ENCODE measurements at regions of chr1 and their contacts with region 1.

Region 1: GRCh38 chr1:205227584-205228006 is at the start of gene TMCC2:
- DNase-seq: peak; percentile 75 to 93 (median 82)
- ATAC-seq: peak; percentile 86 to 90
- H3K4me3 Mint-ChIP-seq: peak within 1 kb of the TSS; percentile 88 to 98 (median 93)
- H3K27ac Mint-ChIP-seq: peak within 1 kb of the TSS; percentile 55 to 95 (median 87)
- H3K4me1 Mint-ChIP-seq: peaks cover 14 to 28% (median 27%) of the 10 kb centered on the region in 4 donors
- H3K27me3 Mint-ChIP-seq: peaks cover 0 to 17% (median 0%) of the 10 kb centered on the region in 5 donors
- polyA plus RNA-seq, gene TMCC2: 0.37 to 2.0 (median 0.40) TPM

Region 2: DNA sequence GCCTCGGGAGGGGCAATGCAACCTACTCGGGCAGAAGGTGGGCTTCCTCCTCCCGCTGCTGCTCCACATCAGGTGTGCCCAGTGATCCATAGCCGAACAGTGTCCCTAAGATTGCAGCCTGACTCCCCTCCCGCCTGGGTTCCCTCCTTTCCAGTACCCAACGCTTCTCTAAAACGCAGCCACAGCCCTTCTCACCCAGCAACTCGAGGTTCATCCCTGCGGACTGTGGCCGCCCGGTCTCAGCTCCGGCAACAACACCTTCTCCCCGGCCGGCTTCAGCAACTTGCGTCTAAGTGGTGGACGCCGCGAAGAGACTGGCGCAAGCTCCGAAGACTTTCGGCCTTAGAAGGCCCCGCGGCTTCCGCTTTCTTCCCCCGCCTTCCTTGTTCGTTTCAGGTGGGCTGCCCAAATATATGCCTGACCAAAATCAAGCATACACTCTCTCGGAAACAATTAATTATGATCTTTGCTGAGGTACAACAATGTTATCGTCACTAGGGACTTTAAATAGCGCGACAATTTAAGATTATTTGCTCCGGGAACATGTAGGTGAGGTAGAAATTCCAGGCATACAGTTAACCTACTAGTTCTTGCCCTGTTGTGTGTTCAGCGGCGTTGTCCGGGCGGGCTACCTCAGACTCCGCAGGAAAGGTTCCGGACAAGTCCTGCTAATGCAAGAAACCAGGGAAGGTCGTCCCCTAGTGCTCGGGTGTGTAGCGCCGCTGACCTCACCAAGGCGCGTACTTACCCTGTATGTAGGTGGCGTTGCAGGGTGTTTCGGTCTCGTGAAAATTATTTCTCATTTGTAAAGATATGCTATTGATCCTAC is 105.7 kb before region 1 on chr1 and contains the start of gene RBBP5:
- POLR2A ChIA-PET with region 1: interaction called, 17 read pairs
- DNase-seq: peak; percentile 81 to 99 (median 94)
- ATAC-seq: peak; percentile 95
- H3K4me3 Mint-ChIP-seq: peak within 1 kb of the TSS; percentile 88 to 100 (median 98)
- H3K27ac Mint-ChIP-seq: peak within 1 kb of the TSS; percentile 98 to 100 (median 100)
- H3K4me1 Mint-ChIP-seq: peaks cover 19 to 53% (median 49%) of the 10 kb centered on the region in 4 donors
- H3K27me3 Mint-ChIP-seq: no peaks in the 10 kb centered on the region
- polyA plus RNA-seq, gene RBBP5: 20.4 to 23.2 (median 22.5) TPM

Region 3: DNA sequence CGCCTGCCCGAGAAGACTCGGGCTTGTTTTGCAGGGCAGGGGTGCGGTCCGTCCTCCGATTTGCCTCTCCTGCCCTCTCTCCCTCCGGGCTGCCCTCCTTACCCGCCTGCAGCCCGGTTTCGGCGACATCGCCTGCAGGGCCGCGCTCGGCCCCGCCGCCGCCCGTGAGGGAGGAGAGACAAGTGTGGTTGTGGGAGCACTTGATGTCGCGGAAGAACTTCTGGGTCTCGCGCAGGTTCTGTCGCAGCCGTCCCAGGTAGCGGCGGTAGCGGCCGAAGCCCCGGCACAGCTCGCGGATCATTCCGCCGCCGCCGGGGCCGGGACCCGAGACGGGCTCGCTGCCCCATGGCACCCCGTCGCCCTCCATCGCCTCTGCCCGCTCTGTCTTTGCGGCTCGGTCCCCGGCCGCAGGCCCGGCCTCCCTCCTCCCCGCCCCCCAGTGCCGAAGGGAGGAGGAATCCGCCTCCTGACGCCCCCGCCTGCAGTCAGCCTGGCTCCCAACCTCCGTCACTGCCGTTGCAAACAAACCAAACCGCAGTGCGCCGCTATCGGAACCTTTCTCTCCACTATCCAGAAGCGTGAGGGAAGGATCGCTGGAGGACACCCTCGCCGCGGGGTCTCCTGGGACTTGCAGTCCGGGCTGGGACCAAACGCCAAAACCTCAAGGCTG is 16.3 kb before region 1 on chr1 and contains the start of gene DSTYK:
- POLR2A ChIA-PET with region 1: interaction called, 35 read pairs
- DNase-seq: peak; percentile 78 to 96 (median 92)
- ATAC-seq: peak; percentile 91 to 92
- H3K4me3 Mint-ChIP-seq: peak within 1 kb of the TSS; percentile 93 to 99 (median 97)
- H3K27ac Mint-ChIP-seq: peak within 1 kb of the TSS; percentile 95 to 100 (median 98)
- H3K4me1 Mint-ChIP-seq: peaks cover 14 to 53% (median 41%) of the 10 kb centered on the region in 4 donors
- H3K27me3 Mint-ChIP-seq: no peaks in the 10 kb centered on the region
- polyA plus RNA-seq, gene DSTYK: 5.2 to 8.6 (median 7.0) TPM